Lower leg skin (tissue), 4 donors: ENCODE measurements at regions of chr19 and their contacts with region 1.

Region 1: DNA sequence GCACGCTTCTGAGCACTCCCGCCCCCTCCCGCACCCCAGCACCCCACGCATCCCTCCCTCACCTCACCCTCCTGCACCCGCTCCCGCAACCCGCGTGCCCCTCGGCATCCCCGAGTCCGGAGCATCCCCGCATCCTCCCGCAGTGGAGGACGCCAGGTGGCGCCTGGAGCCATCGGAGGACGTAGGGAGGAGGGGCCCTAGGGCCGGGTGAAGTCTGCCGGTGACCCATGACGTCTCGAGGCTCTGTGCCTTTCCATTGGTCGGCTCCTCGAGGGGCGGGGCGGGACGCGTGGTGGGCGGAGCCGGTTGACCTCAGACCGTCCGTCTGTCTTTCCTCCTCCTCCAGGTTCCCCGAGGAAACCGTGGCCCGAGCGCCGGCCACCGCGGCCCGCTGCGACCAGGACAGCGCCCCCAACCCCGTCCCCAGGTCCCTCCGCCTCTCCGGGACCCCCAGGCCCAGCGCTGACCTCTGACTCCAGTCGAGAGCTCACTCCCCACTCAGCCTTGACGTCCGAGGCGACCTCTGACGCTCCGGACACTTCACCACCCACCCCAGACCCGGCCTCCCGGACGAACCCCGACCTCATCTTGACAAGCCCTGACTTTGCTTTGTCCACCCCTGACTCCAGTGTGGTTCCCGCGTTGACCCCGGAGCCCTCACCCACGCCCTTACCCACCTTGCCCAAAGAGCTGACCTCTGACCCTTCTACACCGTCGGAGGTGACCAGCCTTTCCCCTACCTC is 19.9 kb downstream of the SBK2 start:
- DNase-seq: peak; percentile 90 to 99
- H3K4me3 ChIP-seq: no peak overlapping the region
- CTCF ChIP-seq: peak in 1 of 3 donors; percentile 62
- POLR2A ChIP-seq: no peak

Region 2: GRCh38 chr19:55549500-55550320 is 32.7 kb after region 1 on chr19:
- intact Hi-C with region 1: no loop called
- DNase-seq: no peak
- H3K4me3 ChIP-seq: no peak overlapping the region
- CTCF ChIP-seq: no peak
- POLR2A ChIP-seq: no peak

Region 3: DNA sequence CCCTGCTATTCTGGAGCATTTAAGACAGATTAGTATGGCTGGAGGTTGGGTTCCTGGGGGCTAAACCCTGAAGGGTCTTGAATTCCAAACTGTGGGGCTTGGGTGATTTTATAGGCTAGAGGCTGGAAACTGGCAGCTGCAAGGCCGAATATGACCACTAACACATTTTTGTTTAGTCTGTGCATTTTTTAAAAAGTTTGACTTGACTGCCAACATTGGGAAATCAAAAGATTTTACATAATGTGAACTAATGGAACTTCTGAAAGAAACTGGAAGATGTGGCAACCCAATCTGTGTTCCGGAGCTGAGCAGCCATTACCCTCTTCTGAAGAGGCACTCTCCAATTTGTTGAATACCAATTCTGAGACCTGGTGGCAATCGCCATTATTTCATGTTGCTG is 102.2 kb after region 1 on chr19:
- intact Hi-C with region 1: loop called (anchors 10 kb)
- DNase-seq: no peak
- H3K4me3 ChIP-seq: no peak overlapping the region
- CTCF ChIP-seq: no peak
- POLR2A ChIP-seq: no peak

Region 4: GRCh38 chr19:55632463-55632834 is 115.4 kb after region 1 on chr19:
- intact Hi-C with region 1: loop called (anchors 5 kb)
- DNase-seq: peak; percentile 95 to 97
- H3K4me3 ChIP-seq: no peak overlapping the region
- CTCF ChIP-seq: peak in 2 of 3 donors; percentile 37 to 71
- POLR2A ChIP-seq: no peak

Region 5: GRCh38 chr19:57088133-57088532 is 1571.1 kb after region 1 on chr19:
- intact Hi-C with region 1: no loop called
- DNase-seq: no peak
- H3K4me3 ChIP-seq: no peak overlapping the region
- CTCF ChIP-seq: no peak
- POLR2A ChIP-seq: no peak